Activated B cell treated with CpG ODN at 0.5 μM for 24 hours (primary cell): ENCODE measurements at regions of chr13 and their contacts with region 1.

Region 1: DNA sequence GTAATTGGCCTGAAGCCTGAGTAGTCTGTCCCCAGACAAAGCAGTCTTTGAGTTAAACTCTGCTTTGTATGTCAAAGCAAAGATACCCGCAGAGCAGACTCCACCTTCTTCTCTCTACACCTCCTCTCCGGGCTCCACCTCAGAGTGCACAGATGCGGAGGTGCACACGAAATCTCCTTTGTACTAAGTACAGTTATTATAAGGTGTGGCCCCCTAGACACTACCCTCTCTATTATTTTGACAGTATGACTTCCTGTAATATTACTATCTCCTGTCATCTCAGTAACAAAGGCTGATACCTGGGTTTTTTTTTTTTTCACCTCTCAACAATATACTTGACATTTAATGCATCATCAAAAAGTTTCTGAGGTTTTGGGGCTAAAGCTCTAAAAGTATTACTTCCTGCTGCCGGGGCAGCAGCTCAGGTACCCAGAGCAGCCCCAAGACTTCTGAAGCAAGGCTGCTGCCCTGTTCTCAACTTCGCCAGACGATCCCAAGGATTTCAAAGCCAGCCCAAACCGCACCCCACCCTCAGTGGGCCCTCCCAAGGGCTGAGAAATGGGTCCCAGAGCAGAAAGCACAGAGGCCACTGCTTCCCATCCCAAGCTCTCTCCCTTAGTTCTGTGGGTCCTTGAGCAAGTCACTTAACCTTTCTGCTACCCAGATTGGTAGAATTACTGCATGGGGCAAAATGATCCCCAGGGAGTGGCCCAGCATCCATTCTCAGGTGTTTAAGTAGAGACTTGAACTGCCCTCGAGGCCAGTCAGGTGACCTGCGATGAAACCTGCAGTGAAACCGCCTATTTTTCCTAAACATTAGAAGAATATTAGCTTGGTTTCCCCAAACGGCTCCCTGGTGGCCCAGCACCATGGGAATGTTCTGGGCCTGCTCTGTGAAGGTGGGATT is 180.6 kb downstream of the FOXO1 start:
- DNase-seq: no peak
- ATAC-seq: peak; percentile 55
- H3K4me3 Mint-ChIP-seq: no peak overlapping the region
- H3K27ac Mint-ChIP-seq: peak overlapping the region; percentile 63
- H3K4me1 Mint-ChIP-seq: peaks cover 50% of the 10 kb centered on the region
- H3K27me3 Mint-ChIP-seq: peaks cover 1% of the 10 kb centered on the region
- CTCF ChIP-seq: no peak

Region 2: GRCh38 chr13:40190641-40191100 is 295.2 kb before region 1 on chr13:
- CTCF ChIA-PET with region 1: no interaction called
- POLR2A ChIA-PET with region 1: no interaction called
- intact Hi-C with region 1: no loop called
- DNase-seq: no peak
- ATAC-seq: peak; percentile 93
- H3K4me3 Mint-ChIP-seq: peak overlapping the region; percentile 53
- H3K27ac Mint-ChIP-seq: peak overlapping the region; percentile 69
- H3K4me1 Mint-ChIP-seq: peaks cover 28% of the 10 kb centered on the region
- H3K27me3 Mint-ChIP-seq: no peaks in the 10 kb centered on the region
- CTCF ChIP-seq: no peak

Region 3: DNA sequence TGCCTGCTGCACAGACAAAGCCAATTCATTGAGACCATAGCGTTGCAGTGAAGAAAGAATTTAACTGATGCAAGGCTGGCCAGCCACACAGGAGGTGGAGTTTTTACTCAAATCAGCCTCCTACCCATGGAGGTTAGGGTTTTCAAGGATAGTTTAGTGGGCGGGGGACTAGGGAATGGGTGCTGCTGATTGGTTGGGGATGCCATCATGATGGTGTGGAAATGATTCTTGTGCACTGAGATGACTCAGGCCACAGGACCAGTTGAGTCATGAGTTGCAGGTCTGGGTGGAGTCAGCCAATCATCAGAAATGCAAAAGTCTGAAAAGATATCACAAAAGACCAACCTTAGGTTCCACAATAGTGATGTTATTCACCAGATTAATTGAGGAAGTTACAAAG is 179.0 kb before region 1 on chr13:
- CTCF ChIA-PET with region 1: no interaction called
- POLR2A ChIA-PET with region 1: no interaction called
- intact Hi-C with region 1: no loop called
- DNase-seq: no peak
- ATAC-seq: no peak
- H3K4me3 Mint-ChIP-seq: no peak overlapping the region
- H3K27ac Mint-ChIP-seq: no peak overlapping the region
- H3K4me1 Mint-ChIP-seq: no peaks in the 10 kb centered on the region
- H3K27me3 Mint-ChIP-seq: no peaks in the 10 kb centered on the region
- CTCF ChIP-seq: no peak

Region 4: GRCh38 chr13:40506592-40507446 is 21.0 kb after region 1 on chr13:
- CTCF ChIA-PET with region 1: no interaction called
- POLR2A ChIA-PET with region 1: no interaction called
- intact Hi-C with region 1: loop called (anchors 2 kb)
- DNase-seq: no peak
- ATAC-seq: no peak
- H3K4me3 Mint-ChIP-seq: no peak overlapping the region
- H3K27ac Mint-ChIP-seq: no peak overlapping the region
- H3K4me1 Mint-ChIP-seq: no peaks in the 10 kb centered on the region
- H3K27me3 Mint-ChIP-seq: no peaks in the 10 kb centered on the region
- CTCF ChIP-seq: no peak

Region 5: GRCh38 chr13:41004875-41005693 is 519.2 kb after region 1 on chr13:
- CTCF ChIA-PET with region 1: no interaction called
- POLR2A ChIA-PET with region 1: no interaction called
- intact Hi-C with region 1: no loop called
- DNase-seq: no peak
- ATAC-seq: peak; percentile 81
- H3K4me3 Mint-ChIP-seq: peak overlapping the region; percentile 12
- H3K27ac Mint-ChIP-seq: peak overlapping the region; percentile 71
- H3K4me1 Mint-ChIP-seq: peaks cover 75% of the 10 kb centered on the region
- H3K27me3 Mint-ChIP-seq: no peaks in the 10 kb centered on the region
- CTCF ChIP-seq: no peak